ENCODE measurements at regions of chr2 and their contacts with region 1.

Region 1: DNA sequence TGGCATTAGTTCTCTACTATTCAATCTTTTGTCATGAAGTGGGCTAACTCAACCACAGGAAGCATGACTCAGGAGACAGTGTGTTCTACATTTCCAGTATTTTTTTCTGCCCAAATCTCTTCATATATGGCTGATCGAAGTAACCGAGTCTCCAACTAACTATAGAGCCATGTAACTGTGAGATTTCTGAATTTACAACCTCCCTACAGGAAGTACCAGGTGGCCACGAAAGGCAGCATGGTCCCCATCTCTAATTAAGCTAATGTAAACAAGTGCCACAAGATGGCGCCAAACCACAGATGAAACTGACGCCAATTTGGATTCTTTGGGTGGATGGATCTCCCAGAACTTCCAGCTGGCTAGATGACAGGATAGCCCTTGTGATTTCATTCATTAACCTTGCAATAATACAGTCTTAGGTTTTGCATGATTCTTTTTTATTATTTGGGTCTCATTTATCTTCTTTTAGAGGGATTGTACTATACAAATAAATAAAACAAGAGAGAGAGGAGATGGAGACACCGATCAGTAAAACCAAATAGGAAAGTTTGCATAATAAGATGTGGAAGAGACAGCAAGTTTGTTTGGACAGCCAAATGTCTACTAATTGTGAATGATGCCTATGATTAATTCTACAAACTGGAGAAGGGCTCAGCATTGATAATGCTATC is 18.3 kb upstream of the ARHGAP15 start:
- DNase-seq: peak; percentile 16 to 87 (median 66)
- ATAC-seq: peak; percentile 88
- H3K4me3 ChIP-seq: no peak overlapping the region
- H3K4me3 Mint-ChIP-seq: no peak overlapping the region
- H3K27ac ChIP-seq: no peak overlapping the region
- H3K27ac Mint-ChIP-seq: peak overlapping the region; percentile 74
- H3K4me1 ChIP-seq: peaks cover 15% of the 10 kb centered on the region
- H3K4me1 Mint-ChIP-seq: peaks cover 24% of the 10 kb centered on the region
- H3K27me3 ChIP-seq: no peaks in the 10 kb centered on the region
- H3K27me3 Mint-ChIP-seq: no peaks in the 10 kb centered on the region
- CTCF ChIP-seq: peak; percentile 85

Region 2: GRCh38 chr2:143034292-143035074 is 76.4 kb before region 1 on chr2:
- CTCF ChIA-PET with region 1: interaction called, 5 read pairs
- POLR2A ChIA-PET with region 1: no interaction called
- intact Hi-C with region 1: loop called (anchors 1 to 5 kb)
- DNase-seq: peak in 8 of 9 experiments; percentile 32 to 88 (median 56)
- ATAC-seq: peak; percentile 100
- H3K4me3 ChIP-seq: no peak overlapping the region
- H3K4me3 Mint-ChIP-seq: no peak overlapping the region
- H3K27ac ChIP-seq: no peak overlapping the region
- H3K27ac Mint-ChIP-seq: no peak overlapping the region
- H3K4me1 ChIP-seq: no peaks in the 10 kb centered on the region
- H3K4me1 Mint-ChIP-seq: no peaks in the 10 kb centered on the region
- H3K27me3 ChIP-seq: no peaks in the 10 kb centered on the region
- H3K27me3 Mint-ChIP-seq: peaks cover 6% of the 10 kb centered on the region
- CTCF ChIP-seq: peak; percentile 99

Region 3: DNA sequence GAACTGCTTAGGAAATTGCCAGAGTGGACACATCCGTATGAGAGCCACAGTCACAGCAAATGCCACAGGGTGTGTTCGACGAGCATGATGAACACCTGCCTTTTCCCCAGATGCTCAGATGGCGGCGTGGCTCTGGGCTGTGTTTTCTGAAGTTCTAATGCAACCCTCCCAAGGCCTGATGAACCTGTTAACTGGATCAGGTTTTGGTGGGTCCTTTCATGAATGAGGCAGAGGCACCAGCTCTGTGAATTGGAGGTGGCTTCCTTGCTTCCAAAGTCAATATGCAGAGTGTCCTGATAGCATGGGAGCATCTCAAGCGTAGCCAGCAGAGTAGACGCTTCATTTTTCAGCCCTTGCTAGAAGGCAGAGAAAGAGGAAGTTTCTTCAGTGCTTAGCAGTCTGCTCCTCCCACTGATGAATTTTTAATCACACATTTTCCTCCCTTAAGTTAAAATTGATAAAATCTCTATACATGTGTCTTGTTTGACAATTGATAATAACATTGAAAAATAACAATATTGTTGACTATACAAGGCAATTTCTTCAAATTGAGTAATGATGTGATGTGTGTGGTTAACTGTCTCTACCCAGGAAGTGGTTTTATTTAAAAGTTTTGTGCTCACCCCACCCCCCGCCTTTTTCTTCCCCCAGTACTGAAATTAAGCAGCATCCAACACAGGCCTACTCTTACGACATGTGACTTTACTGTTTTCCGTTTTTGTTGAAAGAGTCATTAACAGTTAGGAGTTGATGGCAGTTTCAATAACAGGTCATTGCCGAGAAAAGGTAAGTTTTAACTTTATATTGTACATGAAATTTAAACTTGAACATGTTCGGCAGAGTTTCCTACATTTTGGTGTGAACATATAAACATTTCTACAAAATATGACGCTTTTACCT is 18.0 kb after region 1 on chr2 and contains the start of gene ARHGAP15:
- CTCF ChIA-PET with region 1: interaction called, 28 read pairs
- POLR2A ChIA-PET with region 1: interaction called, 20 read pairs
- intact Hi-C with region 1: loop called (anchors 1 to 2 kb)
- DNase-seq: peak; percentile 34 to 93 (median 70)
- ATAC-seq: peak; percentile 84
- H3K4me3 ChIP-seq: peak within 1 kb of the TSS; percentile 48 to 62
- H3K4me3 Mint-ChIP-seq: peak within 1 kb of the TSS; percentile 82
- H3K27ac ChIP-seq: peak within 1 kb of the TSS; percentile 81 to 93
- H3K27ac Mint-ChIP-seq: peak within 1 kb of the TSS; percentile 99
- H3K4me1 ChIP-seq: peaks cover 62% of the 10 kb centered on the region
- H3K4me1 Mint-ChIP-seq: peaks cover 54% of the 10 kb centered on the region
- H3K27me3 ChIP-seq: no peaks in the 10 kb centered on the region
- H3K27me3 Mint-ChIP-seq: no peaks in the 10 kb centered on the region
- CTCF ChIP-seq: no peak
- total RNA-seq, gene ARHGAP15: 115 to 119 TPM

Region 4: GRCh38 chr2:143217512-143218115 is 106.7 kb after region 1 on chr2:
- CTCF ChIA-PET with region 1: interaction called, 52 read pairs
- POLR2A ChIA-PET with region 1: no interaction called
- intact Hi-C with region 1: loop called (anchors 1 kb)
- DNase-seq: no peak
- ATAC-seq: no peak
- H3K4me3 ChIP-seq: no peak overlapping the region
- H3K4me3 Mint-ChIP-seq: no peak overlapping the region
- H3K27ac ChIP-seq: peak overlapping the region in 1 of 2 experiments; percentile 36
- H3K27ac Mint-ChIP-seq: peak overlapping the region; percentile 79
- H3K4me1 ChIP-seq: peaks cover 7% of the 10 kb centered on the region
- H3K4me1 Mint-ChIP-seq: peaks cover 54% of the 10 kb centered on the region
- H3K27me3 ChIP-seq: no peaks in the 10 kb centered on the region
- H3K27me3 Mint-ChIP-seq: no peaks in the 10 kb centered on the region
- CTCF ChIP-seq: no peak

Region 5: GRCh38 chr2:143264851-143265250 is 154.0 kb after region 1 on chr2:
- CTCF ChIA-PET with region 1: interaction called, 102 read pairs
- POLR2A ChIA-PET with region 1: no interaction called
- intact Hi-C with region 1: no loop called
- DNase-seq: no peak
- ATAC-seq: no peak
- H3K4me3 ChIP-seq: no peak overlapping the region
- H3K4me3 Mint-ChIP-seq: no peak overlapping the region
- H3K27ac ChIP-seq: peak overlapping the region in 1 of 2 experiments; percentile 75
- H3K27ac Mint-ChIP-seq: no peak overlapping the region
- H3K4me1 ChIP-seq: peaks cover 22% of the 10 kb centered on the region
- H3K4me1 Mint-ChIP-seq: peaks cover 50% of the 10 kb centered on the region
- H3K27me3 ChIP-seq: no peaks in the 10 kb centered on the region
- H3K27me3 Mint-ChIP-seq: no peaks in the 10 kb centered on the region
- CTCF ChIP-seq: no peak

Region 6: GRCh38 chr2:143458258-143458954 is 347.5 kb after region 1 on chr2:
- CTCF ChIA-PET with region 1: no interaction called
- POLR2A ChIA-PET with region 1: no interaction called
- intact Hi-C with region 1: no loop called
- DNase-seq: no peak
- ATAC-seq: no peak
- H3K4me3 ChIP-seq: no peak overlapping the region
- H3K4me3 Mint-ChIP-seq: no peak overlapping the region
- H3K27ac ChIP-seq: no peak overlapping the region
- H3K27ac Mint-ChIP-seq: no peak overlapping the region
- H3K4me1 ChIP-seq: peaks cover 8% of the 10 kb centered on the region
- H3K4me1 Mint-ChIP-seq: peaks cover 21% of the 10 kb centered on the region
- H3K27me3 ChIP-seq: no peaks in the 10 kb centered on the region
- H3K27me3 Mint-ChIP-seq: no peaks in the 10 kb centered on the region
- CTCF ChIP-seq: no peak

Region 7: GRCh38 chr2:144414324-144414845 is 1303.5 kb after region 1 on chr2:
- CTCF ChIA-PET with region 1: no interaction called
- POLR2A ChIA-PET with region 1: no interaction called
- intact Hi-C with region 1: no loop called
- DNase-seq: peak in 2 of 9 experiments; percentile 21 to 42
- ATAC-seq: no peak
- H3K4me3 ChIP-seq: no peak overlapping the region
- H3K4me3 Mint-ChIP-seq: no peak overlapping the region
- H3K27ac ChIP-seq: peak overlapping the region in 1 of 2 experiments; percentile 20
- H3K27ac Mint-ChIP-seq: no peak overlapping the region
- H3K4me1 ChIP-seq: no peaks in the 10 kb centered on the region
- H3K4me1 Mint-ChIP-seq: peaks cover 2% of the 10 kb centered on the region
- H3K27me3 ChIP-seq: no peaks in the 10 kb centered on the region
- H3K27me3 Mint-ChIP-seq: no peaks in the 10 kb centered on the region
- CTCF ChIP-seq: no peak